AG04450 (cell line): ENCODE measurements at regions of chr20 and their contacts with region 1.

Region 1: DNA sequence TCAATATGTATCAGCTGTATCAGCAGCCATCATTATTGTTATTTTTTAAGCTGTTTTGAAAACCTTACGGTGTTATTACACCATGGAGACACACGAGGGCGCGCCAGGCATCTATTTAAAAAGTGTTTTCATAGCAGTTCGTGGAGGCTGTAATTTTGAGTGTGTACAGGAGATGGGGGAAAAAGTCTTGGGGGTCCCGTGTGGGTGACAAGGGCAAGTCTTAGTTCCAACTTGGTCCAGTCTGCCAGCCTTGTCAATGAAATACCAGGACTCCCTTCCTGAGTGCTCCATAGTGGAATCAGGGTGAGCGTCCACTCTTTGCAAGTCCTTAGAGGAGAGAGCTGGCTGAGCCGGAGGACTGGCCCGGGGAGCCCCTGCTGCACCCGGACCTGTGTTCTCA is 43.3 kb downstream of the SLC2A10 start:
- DNase-seq: no peak
- H3K4me3 ChIP-seq: peak overlapping the region; percentile 17; the same call in 1 of the 2 replicates
- H3K27ac ChIP-seq: no peak overlapping the region
- H3K27me3 ChIP-seq: peaks cover 3% of the 10 kb centered on the region
- CTCF ChIP-seq: peak; percentile 73

Region 2: DNA sequence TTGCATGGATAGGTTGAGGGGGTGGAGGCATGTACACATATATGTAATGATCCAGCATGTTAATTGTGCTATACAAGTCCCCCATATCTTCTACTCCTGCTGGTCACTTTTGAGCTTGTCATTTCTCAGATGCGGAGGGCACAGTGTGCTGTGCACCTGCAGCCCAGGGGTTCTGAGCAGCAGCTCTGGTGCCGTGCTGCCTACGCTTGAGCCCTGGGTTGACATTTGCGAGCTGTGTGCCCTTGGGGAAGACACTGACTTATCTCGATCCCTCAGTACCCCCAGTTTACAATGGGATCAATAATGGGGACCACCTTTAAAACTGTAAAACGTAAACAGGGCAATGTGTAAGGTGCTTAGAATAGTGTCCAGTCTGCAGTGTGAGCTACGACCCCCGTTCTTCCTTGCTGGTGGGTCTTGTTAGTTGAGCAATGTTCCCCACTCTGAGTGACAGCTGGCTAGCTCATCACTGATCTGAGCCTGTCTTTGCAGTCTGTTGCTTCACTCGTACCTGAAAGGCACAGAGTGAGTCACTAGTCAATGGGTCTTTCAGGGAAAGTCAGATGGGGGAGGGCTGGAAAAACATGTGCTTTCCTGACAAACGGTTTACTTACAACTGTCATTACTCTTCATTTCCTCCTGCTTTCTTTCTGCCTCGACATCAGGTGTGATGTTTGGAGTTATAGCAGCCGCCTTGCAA is 48.4 kb after region 1 on chr20:
- CTCF ChIA-PET with region 1: interaction called, 12 read pairs
- POLR2A ChIA-PET with region 1: no interaction called
- DNase-seq: no peak
- H3K4me3 ChIP-seq: no peak overlapping the region
- H3K27ac ChIP-seq: no peak overlapping the region
- H3K27me3 ChIP-seq: peaks cover 37% of the 10 kb centered on the region
- CTCF ChIP-seq: no peak

Region 3: DNA sequence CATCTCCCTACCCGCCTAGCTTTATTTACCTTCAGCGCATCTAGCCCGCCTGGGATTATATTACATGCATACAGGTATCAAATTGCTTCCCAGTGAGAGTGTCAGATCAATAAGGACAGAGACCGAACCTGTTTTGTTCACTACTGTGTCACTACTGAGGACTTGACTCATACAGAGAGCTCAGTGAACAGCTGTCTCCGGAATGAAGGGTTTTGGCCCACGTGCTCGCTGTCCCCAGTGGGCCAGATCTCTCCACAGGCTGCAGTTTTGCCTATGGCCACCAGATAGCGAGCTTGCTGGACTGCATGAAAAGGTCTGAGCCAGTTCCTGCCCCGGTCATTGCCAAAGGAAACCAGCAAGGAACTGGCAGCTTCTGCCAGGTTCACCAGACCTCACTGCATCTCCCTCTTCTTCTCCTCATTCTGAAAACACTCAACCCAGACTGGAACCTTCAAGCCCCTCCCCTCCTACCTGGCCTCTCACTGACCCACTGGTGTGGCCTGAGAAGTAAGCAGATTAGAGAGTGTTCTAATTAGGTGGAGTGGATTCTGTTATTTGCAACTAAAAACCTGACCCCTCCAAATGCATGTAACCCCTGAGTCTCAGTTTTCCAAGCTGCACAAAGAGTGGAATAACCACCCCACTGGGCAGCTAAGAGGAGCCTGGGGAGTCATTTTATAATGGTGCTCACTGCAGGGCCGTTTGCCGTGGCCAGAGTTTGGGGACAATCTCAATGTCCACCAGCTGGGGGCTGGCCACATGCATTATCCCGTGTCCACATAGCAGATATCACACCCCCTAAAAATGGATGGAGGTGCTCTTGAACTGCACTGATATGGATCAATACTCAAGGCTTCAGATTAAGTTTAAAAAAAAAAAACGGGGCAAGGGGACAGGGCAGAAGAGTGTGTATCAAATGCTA is 453.1 kb after region 1 on chr20:
- CTCF ChIA-PET with region 1: interaction called, 10 read pairs
- POLR2A ChIA-PET with region 1: no interaction called
- DNase-seq: peak; percentile 59
- H3K4me3 ChIP-seq: no peak overlapping the region
- H3K27ac ChIP-seq: peak overlapping the region; percentile 21
- H3K27me3 ChIP-seq: no peaks in the 10 kb centered on the region
- CTCF ChIP-seq: peak; percentile 79